ENCODE measurements at regions of chrX and their contacts with region 1.

Region 1: GRCh38 chrX:129679901-129680300 is 25.1 kb upstream of the APLN start:
- DNase-seq: no peak
- ATAC-seq: no peak
- H3K4me3 ChIP-seq: no peak overlapping the region
- H3K27ac ChIP-seq: no peak overlapping the region
- H3K4me1 ChIP-seq: peaks cover 13% of the 10 kb centered on the region
- H3K27me3 ChIP-seq: no peaks in the 10 kb centered on the region
- CTCF ChIP-seq: no peak

Region 2: GRCh38 chrX:129493643-129494042 is 186.3 kb before region 1 on chrX:
- CTCF ChIA-PET with region 1: no interaction called
- POLR2A ChIA-PET with region 1: no interaction called
- in situ Hi-C with region 1: no loop called
- intact Hi-C with region 1: no loop called
- DNase-seq: no peak
- ATAC-seq: peak; percentile 52; the same call in 1 of the 2 replicates
- H3K4me3 ChIP-seq: no peak overlapping the region
- H3K27ac ChIP-seq: no peak overlapping the region
- H3K4me1 ChIP-seq: 0 out of 2 replicates have a peak, but pooled peaks cover 3% of the 10 kb centered on the region
- H3K27me3 ChIP-seq: no peaks in the 10 kb centered on the region
- CTCF ChIP-seq: no peak

Region 3: DNA sequence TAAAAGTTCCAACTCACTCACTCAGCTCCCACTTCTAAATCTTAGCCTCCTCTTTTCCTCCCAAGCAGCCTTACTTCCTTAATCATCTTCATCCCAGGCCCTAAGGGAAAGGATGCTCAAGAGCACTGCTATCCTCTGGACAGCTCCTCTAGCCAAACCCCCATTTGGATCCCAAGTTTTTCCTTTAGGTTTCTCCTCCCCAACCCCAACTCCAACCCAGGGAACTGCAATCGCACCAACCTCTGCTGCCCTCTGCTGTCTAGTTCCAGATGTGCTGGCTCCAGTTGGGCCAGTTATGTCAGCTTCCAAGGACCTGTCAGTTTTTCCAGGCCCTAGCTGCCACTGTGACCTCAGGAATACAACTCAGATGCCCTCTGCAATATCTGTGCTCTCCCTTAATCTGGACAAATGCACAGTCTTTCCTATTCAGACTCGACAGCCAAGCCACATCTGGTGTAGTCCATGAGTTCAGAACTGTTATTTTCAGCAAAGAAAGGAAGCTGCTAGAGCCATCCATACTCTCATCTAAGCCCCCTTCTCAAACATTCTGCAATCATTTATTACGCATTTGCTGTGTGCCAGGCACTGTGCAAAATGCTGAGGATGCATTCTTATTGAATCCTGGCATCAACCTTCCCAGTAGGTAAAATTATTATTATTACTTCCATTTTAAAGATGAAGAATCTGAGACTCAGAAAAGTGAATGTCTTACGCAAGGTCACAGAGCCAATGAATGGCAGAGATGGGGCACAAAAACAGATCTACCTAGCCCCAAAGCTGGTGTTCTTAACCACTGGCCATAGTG is 46.6 kb after region 1 on chrX:
- CTCF ChIA-PET with region 1: no interaction called
- POLR2A ChIA-PET with region 1: no interaction called
- in situ Hi-C with region 1: no loop called
- intact Hi-C with region 1: no loop called
- DNase-seq: peak; percentile 63
- ATAC-seq: peak; percentile 93
- H3K4me3 ChIP-seq: no peak overlapping the region
- H3K27ac ChIP-seq: no peak overlapping the region
- H3K4me1 ChIP-seq: no peaks in the 10 kb centered on the region
- H3K27me3 ChIP-seq: no peaks in the 10 kb centered on the region
- CTCF ChIP-seq: peak; percentile 82

Region 4: DNA sequence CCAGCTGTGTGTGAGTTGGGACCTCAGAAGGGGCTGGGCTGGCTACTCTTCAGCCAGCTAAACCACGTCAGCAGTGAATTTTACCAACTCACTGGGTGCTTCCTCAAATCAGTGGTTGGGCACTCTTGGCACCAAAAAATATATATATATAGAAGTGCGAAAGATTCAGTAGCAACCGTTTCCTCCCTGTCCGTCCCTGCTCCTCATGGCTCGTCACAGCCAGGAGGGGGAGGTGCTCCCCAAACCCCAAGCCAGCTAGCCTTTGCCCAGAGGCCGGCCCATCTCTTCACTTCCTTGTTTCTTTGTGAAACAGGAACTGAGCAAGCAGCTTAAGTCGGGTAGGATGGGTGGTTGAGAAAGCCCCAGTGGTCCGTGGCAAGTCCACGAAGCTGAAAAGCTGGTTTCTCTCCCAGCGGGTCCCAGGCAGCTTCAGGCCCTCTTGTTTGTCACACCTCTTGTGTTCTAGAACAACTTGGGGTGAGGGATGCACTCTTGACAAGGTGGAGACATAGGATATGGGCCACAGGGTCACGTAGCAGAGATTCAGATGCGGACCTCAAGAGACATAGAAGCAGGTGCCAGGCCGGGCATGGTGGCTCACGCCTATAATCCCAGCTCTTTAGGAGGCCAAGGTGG is 93.0 kb after region 1 on chrX:
- CTCF ChIA-PET with region 1: interaction called, 11 read pairs
- POLR2A ChIA-PET with region 1: no interaction called
- in situ Hi-C with region 1: no loop called
- intact Hi-C with region 1: no loop called
- DNase-seq: no peak
- ATAC-seq: no peak
- H3K4me3 ChIP-seq: no peak overlapping the region
- H3K27ac ChIP-seq: no peak overlapping the region
- H3K4me1 ChIP-seq: no peaks in the 10 kb centered on the region
- H3K27me3 ChIP-seq: no peaks in the 10 kb centered on the region
- CTCF ChIP-seq: no peak

Measured in Panc1 (cell line).